ENCODE measurements at regions of chr2 and their contacts with region 1.

Region 1: DNA sequence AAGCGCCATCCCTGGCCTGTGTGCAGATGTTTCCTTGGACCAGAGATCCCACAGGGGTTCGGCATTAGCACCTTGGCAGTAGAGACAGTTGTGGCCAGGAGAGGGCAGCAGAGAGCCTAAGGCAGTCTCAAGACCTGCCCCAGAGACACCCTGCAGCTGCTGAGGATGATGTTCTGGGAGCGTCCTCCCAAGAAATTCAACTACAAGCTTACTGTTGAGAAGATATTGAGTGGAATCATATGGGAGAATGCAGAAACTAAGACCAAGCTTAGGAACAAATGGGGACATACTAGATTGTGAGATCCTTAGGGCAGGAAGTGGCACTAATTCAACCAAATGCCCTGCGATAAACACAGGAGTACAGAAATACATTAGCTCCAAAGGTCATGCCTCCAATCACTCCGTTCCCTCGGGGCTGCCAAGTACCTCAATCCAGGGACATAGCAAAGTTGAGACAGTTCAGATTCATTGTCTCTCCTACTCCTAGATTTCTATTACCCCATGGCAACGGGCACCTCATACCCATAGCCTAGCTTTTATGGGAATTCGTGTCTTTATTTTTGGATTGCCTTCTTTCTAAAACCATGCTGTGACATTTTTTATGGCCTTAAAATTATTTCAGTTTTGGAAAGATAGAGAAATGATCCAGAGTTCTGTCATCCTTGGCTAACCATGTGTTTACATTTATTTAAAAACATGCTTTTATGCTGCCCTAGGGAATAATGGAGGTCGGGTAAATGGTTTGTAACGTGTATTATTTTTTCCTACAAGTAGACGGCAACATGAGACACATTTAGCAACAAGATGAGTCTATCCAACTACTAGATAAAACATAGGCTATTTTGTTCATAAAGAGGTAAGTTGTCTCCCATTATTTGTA is 2.2 kb upstream of the ERMN start:
- H3K4me3 Mint-ChIP-seq: no peak overlapping the region
- H3K27ac Mint-ChIP-seq: no peak overlapping the region
- H3K4me1 Mint-ChIP-seq: peaks cover 12% of the 10 kb centered on the region
- H3K27me3 Mint-ChIP-seq: no peaks in the 10 kb centered on the region

Region 2: GRCh38 chr2:157302492-157303099 is 25.3 kb before region 1 on chr2:
- intact Hi-C with region 1: no loop called
- H3K4me3 Mint-ChIP-seq: no peak overlapping the region
- H3K27ac Mint-ChIP-seq: no peak overlapping the region
- H3K4me1 Mint-ChIP-seq: peaks cover 5% of the 10 kb centered on the region
- H3K27me3 Mint-ChIP-seq: peaks cover 5% of the 10 kb centered on the region

Region 3: GRCh38 chr2:157427003-157427921 is 99.4 kb after region 1 on chr2:
- intact Hi-C with region 1: loop called (anchors 5 kb)
- H3K4me3 Mint-ChIP-seq: no peak overlapping the region
- H3K27ac Mint-ChIP-seq: peak overlapping the region; percentile 43
- H3K4me1 Mint-ChIP-seq: peaks cover 25% of the 10 kb centered on the region
- H3K27me3 Mint-ChIP-seq: no peaks in the 10 kb centered on the region

Region 4: GRCh38 chr2:157492189-157492773 is 164.4 kb after region 1 on chr2:
- intact Hi-C with region 1: loop called (anchors 5 kb)
- H3K4me3 Mint-ChIP-seq: no peak overlapping the region
- H3K27ac Mint-ChIP-seq: peak overlapping the region; percentile 21
- H3K4me1 Mint-ChIP-seq: peaks cover 38% of the 10 kb centered on the region
- H3K27me3 Mint-ChIP-seq: no peaks in the 10 kb centered on the region

Region 5: GRCh38 chr2:157625296-157625695 is 297.4 kb after region 1 on chr2:
- intact Hi-C with region 1: no loop called
- H3K4me3 Mint-ChIP-seq: no peak overlapping the region
- H3K27ac Mint-ChIP-seq: no peak overlapping the region
- H3K4me1 Mint-ChIP-seq: peaks cover 12% of the 10 kb centered on the region
- H3K27me3 Mint-ChIP-seq: peaks cover 29% of the 10 kb centered on the region